ENCODE measurements at regions of chr3 and their contacts with region 1.

Region 1: DNA sequence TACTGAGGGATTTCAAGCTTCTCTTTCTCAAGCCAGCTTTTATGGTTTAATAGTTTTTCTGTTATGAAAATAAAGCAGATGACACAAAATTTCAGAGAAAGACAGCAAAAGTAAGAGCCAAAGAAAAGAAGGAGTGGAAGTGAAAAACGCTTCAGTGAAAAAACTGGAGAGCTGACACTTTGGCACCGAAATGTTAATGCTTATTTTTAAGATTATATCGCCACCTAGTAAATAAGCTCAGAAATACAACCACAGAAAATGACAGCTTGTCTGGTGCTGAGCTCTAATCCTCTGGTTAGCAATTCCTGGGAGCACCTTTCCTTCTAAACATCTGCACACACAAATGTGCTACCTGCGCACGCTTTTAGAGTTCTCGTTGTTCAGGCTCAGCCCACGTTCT is 101.6 kb downstream of the ZPLD1 start:
- DNase-seq: no peak
- H3K4me3 ChIP-seq: no peak overlapping the region
- H3K27ac ChIP-seq: no peak overlapping the region
- H3K4me1 ChIP-seq: no peaks in the 10 kb centered on the region
- H3K27me3 ChIP-seq: no peaks in the 10 kb centered on the region
- CTCF ChIP-seq: peak in 5 of 6 experiments; percentile 23 to 55 (median 38)
- POLR2A ChIP-seq: no peak

Region 2: GRCh38 chr3:102229062-102229655 is 307.3 kb before region 1 on chr3:
- intact Hi-C with region 1: loop called in 1 of 2 experiments (anchors 5 kb)
- DNase-seq: peak; percentile 51 to 90 (median 69)
- H3K4me3 ChIP-seq: no peak overlapping the region
- H3K27ac ChIP-seq: no peak overlapping the region
- H3K4me1 ChIP-seq: peaks cover 0 to 3% of the 10 kb centered on the region in 2 donors
- H3K27me3 ChIP-seq: no peaks in the 10 kb centered on the region
- CTCF ChIP-seq: peak; percentile 84 to 95 (median 90)
- POLR2A ChIP-seq: no peak

Region 3: GRCh38 chr3:102240720-102241119 is 295.7 kb before region 1 on chr3:
- intact Hi-C with region 1: loop called in 1 of 2 experiments (anchors 5 kb)
- DNase-seq: no peak
- H3K4me3 ChIP-seq: no peak overlapping the region
- H3K27ac ChIP-seq: no peak overlapping the region
- H3K4me1 ChIP-seq: no peaks in the 10 kb centered on the region
- H3K27me3 ChIP-seq: no peaks in the 10 kb centered on the region
- CTCF ChIP-seq: no peak
- POLR2A ChIP-seq: no peak

Measured in adrenal gland (tissue), 19 donors.